ENCODE measurements at regions of chr1 and their contacts with region 1.

Region 1: GRCh38 chr1:184754476-184755225 is at the start of gene EDEM3:
- DNase-seq: peak; percentile 98
- ATAC-seq: peak; percentile 95
- H3K4me3 Mint-ChIP-seq: peak within 1 kb of the TSS; percentile 95
- H3K27ac Mint-ChIP-seq: peak within 1 kb of the TSS; percentile 93
- H3K4me1 Mint-ChIP-seq: peaks cover 44% of the 10 kb centered on the region
- H3K27me3 Mint-ChIP-seq: peaks cover 3% of the 10 kb centered on the region
- total RNA-seq, gene EDEM3: 14.0 to 15.2 TPM

Region 2: DNA sequence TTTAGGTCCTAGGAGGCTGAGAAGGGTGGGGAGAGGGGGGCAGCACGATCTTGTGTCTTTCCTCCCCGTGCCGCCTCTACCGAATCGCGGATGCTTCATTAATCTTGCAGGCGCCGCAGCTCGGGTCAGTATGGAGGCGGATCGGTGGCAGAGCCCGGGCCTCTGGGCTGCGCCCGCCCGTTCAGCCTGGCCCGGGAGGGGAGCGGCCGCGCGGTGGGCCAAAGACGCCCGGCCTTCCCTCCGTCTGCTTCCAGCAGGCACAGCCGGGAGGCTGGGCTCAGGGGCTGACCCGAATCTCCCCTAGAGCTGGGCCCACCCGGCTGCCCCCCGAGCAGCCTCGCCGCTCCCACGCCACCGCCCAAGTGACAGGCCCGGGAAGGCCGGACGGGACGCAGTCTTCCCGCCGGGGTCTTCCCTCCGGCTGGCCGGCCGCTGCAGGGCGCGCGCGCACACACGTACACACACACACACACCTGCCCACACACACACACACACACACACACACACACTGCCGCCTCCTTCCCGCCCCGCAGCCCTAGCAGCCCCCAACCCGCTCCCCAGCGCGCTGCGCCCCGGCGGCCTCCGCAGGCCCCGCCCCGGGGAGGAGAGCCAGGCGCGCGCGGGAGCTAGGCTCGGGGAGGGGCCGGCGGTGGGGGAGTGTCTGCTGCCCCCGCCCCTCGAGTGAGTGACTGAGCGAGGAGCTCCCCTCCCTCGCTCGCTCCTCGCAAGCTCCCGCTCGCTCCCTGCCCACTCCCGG is 368.2 kb before region 1 on chr1 and contains the start of gene C1orf21:
- CTCF ChIA-PET with region 1: no interaction called
- POLR2A ChIA-PET with region 1: no interaction called
- intact Hi-C with region 1: loop called in 1 of 2 experiments (anchors 2 kb)
- DNase-seq: peak; percentile 89
- ATAC-seq: peak; percentile 95
- H3K4me3 Mint-ChIP-seq: peak within 1 kb of the TSS; percentile 66
- H3K27ac Mint-ChIP-seq: peak within 1 kb of the TSS; percentile 38
- H3K4me1 Mint-ChIP-seq: peaks cover 12% of the 10 kb centered on the region
- H3K27me3 Mint-ChIP-seq: peaks cover 44% of the 10 kb centered on the region
- total RNA-seq, gene C1orf21: 2.6 to 6.1 TPM

Region 3: DNA sequence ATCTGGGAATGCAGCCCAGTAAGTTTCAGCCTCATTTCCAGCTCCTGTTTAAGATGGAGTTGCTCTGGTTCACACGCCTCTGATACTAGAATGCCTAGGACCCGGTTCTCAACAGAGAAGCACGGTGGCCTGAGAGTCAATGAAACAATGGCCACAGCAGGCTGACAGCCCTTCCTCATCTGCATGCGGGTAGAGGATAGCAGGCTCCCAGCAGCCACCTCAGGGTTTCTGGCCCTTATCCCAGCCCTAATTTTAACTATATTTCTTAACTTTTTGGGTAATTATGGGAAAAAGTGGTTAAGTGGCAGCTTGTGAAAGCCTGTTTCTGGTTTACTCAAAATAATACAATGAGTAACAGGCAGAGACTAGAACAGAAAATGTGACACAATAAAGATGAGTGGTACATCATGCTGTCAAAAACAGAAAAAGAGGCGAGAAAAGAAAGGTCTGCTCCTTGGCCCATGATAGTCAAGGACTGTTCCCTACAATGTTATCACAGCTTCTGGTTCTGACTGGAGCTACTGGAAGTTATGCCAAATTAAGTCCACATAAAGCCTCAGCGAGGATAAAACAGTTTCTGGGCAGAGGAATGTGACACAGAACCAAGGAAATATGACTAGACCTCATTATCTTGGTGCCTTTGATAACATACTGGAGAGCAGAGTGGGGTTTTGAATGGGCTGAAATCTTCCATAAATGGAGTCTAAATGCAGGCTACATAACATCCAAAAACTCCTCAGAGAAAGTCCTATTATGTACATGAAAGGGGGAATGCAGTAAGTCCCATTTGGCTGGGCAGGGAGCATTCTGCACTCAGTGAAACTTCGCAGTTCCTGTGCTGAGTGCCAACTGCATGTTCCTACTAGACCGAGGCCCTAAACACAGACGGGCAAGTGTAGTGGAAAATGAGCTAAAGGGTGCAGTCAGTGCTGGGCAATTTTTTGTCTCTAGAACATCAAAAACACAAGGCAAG is 127.6 kb after region 1 on chr1:
- CTCF ChIA-PET with region 1: no interaction called
- POLR2A ChIA-PET with region 1: interaction called, 3 read pairs
- intact Hi-C with region 1: loop called in 1 of 2 experiments (anchors 2 kb)
- DNase-seq: peak; percentile 50
- ATAC-seq: peak; percentile 79
- H3K4me3 Mint-ChIP-seq: peak overlapping the region; percentile 5
- H3K27ac Mint-ChIP-seq: peak overlapping the region; percentile 90
- H3K4me1 Mint-ChIP-seq: peaks cover 27% of the 10 kb centered on the region
- H3K27me3 Mint-ChIP-seq: peaks cover 6% of the 10 kb centered on the region

Region 4: DNA sequence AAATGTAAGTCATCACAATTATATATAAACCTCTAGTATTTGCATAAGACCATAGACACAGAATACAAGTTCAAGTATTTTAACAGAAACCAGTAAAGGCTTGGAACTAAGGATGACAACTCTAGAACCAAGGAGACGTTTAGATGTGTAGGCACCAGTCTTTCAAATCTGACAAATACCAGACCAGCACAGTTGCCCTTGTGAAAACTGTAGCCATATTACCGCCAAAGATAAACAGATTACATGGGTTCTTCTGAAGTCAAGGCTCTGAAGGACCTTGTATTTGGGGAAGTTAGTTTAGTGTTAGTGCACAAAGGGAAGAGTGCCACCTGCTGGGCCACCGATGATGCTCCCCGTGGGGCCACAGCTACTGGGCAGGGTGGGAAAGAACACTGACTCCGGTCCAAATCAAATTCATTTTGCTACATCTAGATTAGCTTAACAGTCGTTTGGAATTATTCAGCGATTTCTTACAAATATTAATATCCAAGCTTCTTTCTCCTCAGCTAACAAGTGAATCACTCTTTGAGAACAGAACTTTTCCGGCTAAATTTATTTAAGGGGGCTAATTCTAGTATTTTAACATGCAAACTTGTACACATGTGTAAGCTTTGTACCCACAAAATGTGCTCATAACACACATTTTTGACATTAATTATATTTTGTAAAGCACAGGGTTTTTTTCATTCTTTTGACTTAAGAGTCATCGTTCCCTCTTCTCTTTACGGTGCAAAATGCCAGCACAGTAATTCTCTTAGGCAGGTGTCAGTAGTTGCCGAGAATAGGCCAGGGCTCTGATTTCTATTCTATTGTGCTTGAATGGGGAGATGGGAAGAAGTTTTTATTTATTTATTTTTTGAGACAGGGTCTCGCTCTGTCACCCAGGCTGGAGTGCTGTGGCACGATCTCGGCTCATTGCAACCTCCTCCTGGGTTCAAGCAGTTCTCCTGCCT is 227.6 kb after region 1 on chr1:
- CTCF ChIA-PET with region 1: interaction called, 5 read pairs
- POLR2A ChIA-PET with region 1: no interaction called
- intact Hi-C with region 1: loop called in 1 of 2 experiments (anchors 1 kb)
- DNase-seq: peak; percentile 88
- ATAC-seq: peak; percentile 99
- H3K4me3 Mint-ChIP-seq: no peak overlapping the region
- H3K27ac Mint-ChIP-seq: no peak overlapping the region
- H3K4me1 Mint-ChIP-seq: peaks cover 4% of the 10 kb centered on the region
- H3K27me3 Mint-ChIP-seq: peaks cover 16% of the 10 kb centered on the region

Region 5: DNA sequence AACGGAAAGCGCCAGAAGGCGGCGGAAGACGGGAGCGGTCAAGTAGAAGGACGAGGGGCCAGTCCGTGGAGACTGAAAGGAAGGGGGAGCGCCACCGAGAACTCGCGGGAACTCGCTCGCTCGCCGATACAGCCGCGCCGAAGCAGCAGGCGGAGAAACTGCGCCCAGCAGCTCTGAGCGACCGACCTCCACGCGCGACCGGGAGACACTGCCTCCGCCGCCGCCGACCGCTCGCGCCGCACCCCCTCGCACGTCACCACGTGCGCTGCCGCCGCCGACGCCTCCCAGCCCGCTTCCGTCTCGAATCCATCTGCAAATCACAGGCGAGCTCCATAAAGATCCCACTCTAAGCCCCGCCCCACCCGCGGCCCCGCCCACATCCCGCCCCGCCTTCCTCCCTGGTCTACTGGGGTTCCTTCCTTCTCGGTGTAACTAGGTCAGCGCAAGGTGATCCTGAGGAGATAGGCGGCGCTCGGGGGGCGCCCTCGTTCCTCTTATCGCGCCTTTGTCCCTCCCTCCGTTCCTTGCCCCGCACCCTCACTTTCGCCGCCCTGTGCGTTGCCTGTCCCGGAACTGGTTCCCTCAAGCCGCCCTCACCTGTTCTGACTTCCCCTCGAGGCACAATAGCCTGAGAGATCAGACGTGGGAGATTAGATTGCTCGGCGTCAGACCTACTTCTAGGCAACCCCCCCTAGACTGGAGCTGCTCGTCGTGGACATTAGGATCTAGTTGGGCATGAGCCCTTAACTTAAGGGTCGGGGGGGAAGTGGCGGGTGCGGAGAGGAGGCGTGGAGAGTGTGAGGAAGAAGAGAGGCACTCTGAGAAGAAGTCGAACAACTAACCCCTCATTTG is 562.6 kb after region 1 on chr1 and contains the start of gene IVNS1ABP:
- CTCF ChIA-PET with region 1: no interaction called
- POLR2A ChIA-PET with region 1: no interaction called
- intact Hi-C with region 1: loop called (anchors 1 to 2 kb)
- DNase-seq: peak; percentile 97
- ATAC-seq: peak; percentile 81
- H3K4me3 Mint-ChIP-seq: peak within 1 kb of the TSS; percentile 84
- H3K27ac Mint-ChIP-seq: peak within 1 kb of the TSS; percentile 99
- H3K4me1 Mint-ChIP-seq: peaks cover 38% of the 10 kb centered on the region
- H3K27me3 Mint-ChIP-seq: no peaks in the 10 kb centered on the region
- total RNA-seq, gene IVNS1ABP: 116 to 129 TPM

Region 6: GRCh38 chr1:186375088-186375953 is 1620.7 kb after region 1 on chr1 and contains the starts of genes ODR4 and TPR:
- CTCF ChIA-PET with region 1: no interaction called
- POLR2A ChIA-PET with region 1: no interaction called
- intact Hi-C with region 1: loop called (anchors 10 kb)
- DNase-seq: peak; percentile 97
- ATAC-seq: peak; percentile 90
- H3K4me3 Mint-ChIP-seq: peak within 1 kb of the TSS; percentile 98
- H3K27ac Mint-ChIP-seq: peak within 1 kb of the TSS; percentile 98
- H3K4me1 Mint-ChIP-seq: peaks cover 37% of the 10 kb centered on the region
- H3K27me3 Mint-ChIP-seq: no peaks in the 10 kb centered on the region
- total RNA-seq, gene ODR4: 13.1 to 14.0 TPM
- total RNA-seq, gene TPR: 151 to 152 TPM

Measured in activated CD4-positive, alpha-beta T cell treated with anti-CD3 and anti-CD28 coated beads for 36 hours (primary cell).